GM12878 (cell line): ENCODE measurements at regions of chr7 and their contacts with region 1.

Region 1: GRCh38 chr7:36487756-36488336 is 98.2 kb downstream of the ANLN start:
- DNase-seq: peak; percentile 21
- ATAC-seq: peak; percentile 57; the same call in 2 of the 3 replicates
- H3K4me3 ChIP-seq: no peak overlapping the region
- H3K27ac ChIP-seq: no peak overlapping the region
- H3K4me1 ChIP-seq: no peaks in the 10 kb centered on the region
- H3K27me3 ChIP-seq: no peaks in the 10 kb centered on the region; a peak in 1 of 4 replicates
- CTCF ChIP-seq: peak; percentile 57 to 77 (median 65); a peak in 5 of 6 replicates
- EP300 ChIP-seq: no peak
- POLR2A ChIP-seq: no peak
- RAD21 ChIP-seq: peak; percentile 84

Region 2: GRCh38 chr7:36639826-36640225 is 152.0 kb after region 1 on chr7:
- CTCF ChIA-PET with region 1: no interaction called
- POLR2A ChIA-PET with region 1: no interaction called
- RAD21 ChIA-PET with region 1: no interaction called
- SMC1A ChIA-PET with region 1: no interaction called
- in situ Hi-C with region 1: no loop called
- intact Hi-C with region 1: no loop called
- DNase-seq: no peak
- ATAC-seq: no peak
- H3K4me3 ChIP-seq: no peak overlapping the region
- H3K27ac ChIP-seq: no peak overlapping the region
- H3K4me1 ChIP-seq: no peaks in the 10 kb centered on the region
- H3K27me3 ChIP-seq: no peaks in the 10 kb centered on the region; a peak in 1 of 4 replicates
- CTCF ChIP-seq: no peak
- EP300 ChIP-seq: no peak
- POLR2A ChIP-seq: no peak
- RAD21 ChIP-seq: no peak

Region 3: DNA sequence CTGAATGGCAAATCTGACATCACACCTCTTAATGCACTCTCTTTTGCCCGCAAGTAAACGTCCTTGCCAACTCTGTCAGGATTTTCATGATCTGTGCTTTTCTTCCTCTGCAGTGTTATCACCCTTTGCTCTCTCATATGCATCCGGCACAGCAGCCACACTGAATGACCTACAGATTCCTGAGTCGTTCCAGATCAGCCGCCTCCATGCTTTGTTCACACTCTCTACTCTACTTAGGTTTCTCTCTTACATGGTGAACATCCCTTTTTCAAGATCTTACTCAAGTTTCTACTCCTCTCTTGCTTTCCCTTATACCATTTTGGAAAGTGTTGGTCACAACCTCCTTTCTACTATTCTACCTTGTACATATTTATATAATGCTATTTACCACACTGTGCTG is 364.2 kb after region 1 on chr7:
- CTCF ChIA-PET with region 1: no interaction called
- POLR2A ChIA-PET with region 1: no interaction called
- RAD21 ChIA-PET with region 1: no interaction called
- SMC1A ChIA-PET with region 1: no interaction called
- in situ Hi-C with region 1: no loop called
- intact Hi-C with region 1: loop called (anchors 10 kb)
- DNase-seq: no peak
- ATAC-seq: no peak
- H3K4me3 ChIP-seq: no peak overlapping the region
- H3K27ac ChIP-seq: no peak overlapping the region
- H3K4me1 ChIP-seq: no peaks in the 10 kb centered on the region
- H3K27me3 ChIP-seq: no peaks in the 10 kb centered on the region
- CTCF ChIP-seq: no peak
- EP300 ChIP-seq: no peak
- POLR2A ChIP-seq: no peak
- RAD21 ChIP-seq: no peak